ENCODE measurements at regions of chr13 and their contacts with region 1.

Region 1: GRCh38 chr13:98842864-98843481 is 90.5 kb upstream of the SLC15A1 start:
- DNase-seq: peak; percentile 54
- H3K4me3 Mint-ChIP-seq: no peak overlapping the region
- H3K27ac Mint-ChIP-seq: no peak overlapping the region
- H3K4me1 Mint-ChIP-seq: no peaks in the 10 kb centered on the region
- H3K27me3 Mint-ChIP-seq: no peaks in the 10 kb centered on the region
- CTCF ChIP-seq: peak; percentile 26

Region 2: GRCh38 chr13:97849305-97849704 is 993.7 kb before region 1 on chr13:
- CTCF ChIA-PET with region 1: no interaction called
- intact Hi-C with region 1: loop called (anchors 10 kb)
- DNase-seq: no peak
- H3K4me3 Mint-ChIP-seq: no peak overlapping the region
- H3K27ac Mint-ChIP-seq: no peak overlapping the region
- H3K4me1 Mint-ChIP-seq: peaks cover 9% of the 10 kb centered on the region
- H3K27me3 Mint-ChIP-seq: peaks cover 26% of the 10 kb centered on the region
- CTCF ChIP-seq: no peak